T-cell (primary cell): ENCODE measurements at regions of chr18 and their contacts with region 1.

Region 1: GRCh38 chr18:57649556-57650500 is 28.2 kb upstream of the NARS1 start:
- DNase-seq: no peak
- ATAC-seq: no peak
- H3K4me3 ChIP-seq: no peak overlapping the region
- H3K4me3 Mint-ChIP-seq: no peak overlapping the region
- H3K27ac ChIP-seq: no peak overlapping the region
- H3K27ac Mint-ChIP-seq: no peak overlapping the region
- H3K4me1 ChIP-seq: peaks cover 0 to 5% of the 10 kb centered on the region in 2 experiments
- H3K4me1 Mint-ChIP-seq: peaks cover 17 to 38% (median 19%) of the 10 kb centered on the region in 3 donors
- H3K27me3 ChIP-seq: peaks cover 0 to 2% of the 10 kb centered on the region in 2 experiments
- H3K27me3 Mint-ChIP-seq: no peaks in the 10 kb centered on the region

Region 2: GRCh38 chr18:57595347-57595746 is 54.5 kb before region 1 on chr18:
- CTCF ChIA-PET with region 1: no interaction called
- POLR2A ChIA-PET with region 1: no interaction called
- DNase-seq: no peak
- ATAC-seq: no peak
- H3K4me3 ChIP-seq: no peak overlapping the region
- H3K4me3 Mint-ChIP-seq: no peak overlapping the region
- H3K27ac ChIP-seq: no peak overlapping the region
- H3K27ac Mint-ChIP-seq: no peak overlapping the region
- H3K4me1 ChIP-seq: peaks cover 0 to 7% of the 10 kb centered on the region in 2 experiments
- H3K4me1 Mint-ChIP-seq: peaks cover 9 to 16% (median 16%) of the 10 kb centered on the region in 3 donors
- H3K27me3 ChIP-seq: no peaks in the 10 kb centered on the region
- H3K27me3 Mint-ChIP-seq: no peaks in the 10 kb centered on the region

Region 3: GRCh38 chr18:57677262-57678211 is 27.7 kb after region 1 on chr18:
- CTCF ChIA-PET with region 1: interaction called in 1 of 2 experiments, 12 read pairs
- POLR2A ChIA-PET with region 1: no interaction called
- DNase-seq: no peak
- ATAC-seq: no peak
- H3K4me3 ChIP-seq: no peak overlapping the region
- H3K4me3 Mint-ChIP-seq: no peak overlapping the region
- H3K27ac ChIP-seq: no peak overlapping the region
- H3K27ac Mint-ChIP-seq: no peak overlapping the region
- H3K4me1 ChIP-seq: no peaks in the 10 kb centered on the region
- H3K4me1 Mint-ChIP-seq: peaks cover 14 to 25% (median 17%) of the 10 kb centered on the region in 3 donors
- H3K27me3 ChIP-seq: no peaks in the 10 kb centered on the region
- H3K27me3 Mint-ChIP-seq: no peaks in the 10 kb centered on the region

Region 4: DNA sequence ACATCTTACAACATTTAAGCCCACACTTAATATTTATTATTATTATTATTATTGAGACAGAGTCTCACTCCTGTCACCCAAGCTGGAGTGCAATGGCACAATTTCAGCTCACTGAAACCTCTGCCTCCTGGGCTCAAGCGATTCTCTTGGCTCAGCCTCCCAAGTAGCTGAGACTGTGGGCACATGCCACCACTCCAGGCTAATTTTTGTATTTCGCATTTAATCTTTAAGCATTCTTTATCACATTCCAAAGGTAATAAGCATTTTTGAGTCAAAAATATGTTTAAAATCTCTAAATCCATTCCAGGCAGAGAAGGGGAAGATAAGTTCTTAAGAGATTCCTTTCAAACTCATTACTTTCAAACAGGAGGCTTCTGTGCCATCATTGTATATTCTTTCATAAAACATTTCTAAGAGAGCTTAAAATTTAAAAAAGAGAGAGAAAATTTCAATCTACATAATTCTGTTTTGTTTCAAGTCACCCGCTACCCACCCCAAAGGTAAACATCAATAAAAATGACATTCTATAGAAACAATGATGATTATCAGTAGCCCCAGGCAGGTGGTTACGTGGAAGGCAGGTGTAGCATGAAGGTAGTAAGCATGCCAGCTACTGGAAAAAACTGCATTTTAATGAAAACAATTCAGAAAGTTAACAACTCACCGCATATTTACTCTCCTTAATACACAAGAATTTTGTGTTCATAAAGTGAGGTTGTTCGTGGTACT is 56.2 kb after region 1 on chr18:
- CTCF ChIA-PET with region 1: no interaction called
- POLR2A ChIA-PET with region 1: no interaction called
- DNase-seq: no peak
- ATAC-seq: no peak
- H3K4me3 ChIP-seq: no peak overlapping the region
- H3K4me3 Mint-ChIP-seq: no peak overlapping the region
- H3K27ac ChIP-seq: no peak overlapping the region
- H3K27ac Mint-ChIP-seq: no peak overlapping the region
- H3K4me1 ChIP-seq: no peaks in the 10 kb centered on the region
- H3K4me1 Mint-ChIP-seq: peaks cover 0 to 1% (median 0%) of the 10 kb centered on the region in 3 donors
- H3K27me3 ChIP-seq: no peaks in the 10 kb centered on the region
- H3K27me3 Mint-ChIP-seq: no peaks in the 10 kb centered on the region